Activated T-helper 2 cell treated with anti-CD3 and anti-CD28 coated beads, Interferon-gamma antibody, Interleukin-2, Interleukin-4, amounts not matched to agents 10 μg/mL and 5 μg/mL and 100 μg/mL, durations not matched to agents 14 hours and 24 hours and 36 hours (primary cell): ENCODE measurements at regions of chr3 and their contacts with region 1.

Region 1: GRCh38 chr3:151890721-151891141 is 17.3 kb downstream of the SUCNR1 start:
- DNase-seq: no peak
- H3K4me3 Mint-ChIP-seq: no peak overlapping the region
- H3K27ac Mint-ChIP-seq: peak overlapping the region; percentile 35
- H3K4me1 Mint-ChIP-seq: peaks cover 22% of the 10 kb centered on the region
- H3K27me3 Mint-ChIP-seq: no peaks in the 10 kb centered on the region

Region 2: DNA sequence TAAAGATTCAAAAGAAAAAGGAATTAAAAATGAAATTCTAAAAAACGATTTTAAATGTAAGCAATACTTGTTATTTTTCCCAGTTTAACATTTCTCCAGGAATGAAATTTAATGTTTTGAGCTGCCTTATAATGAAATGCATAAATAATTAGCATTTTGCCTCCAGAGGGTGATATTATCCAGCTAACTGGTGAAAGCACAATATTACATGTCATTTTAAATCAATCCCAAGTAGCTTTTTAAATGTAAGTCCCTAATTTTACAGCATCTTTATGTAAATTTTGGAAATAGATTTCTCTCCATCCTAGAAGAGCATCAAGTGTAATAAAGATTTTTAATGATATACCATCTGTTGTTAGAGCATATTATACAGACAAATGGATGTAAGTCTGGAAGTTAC is 805.1 kb after region 1 on chr3:
- intact Hi-C with region 1: loop called (anchors 10 kb)
- DNase-seq: no peak
- H3K4me3 Mint-ChIP-seq: no peak overlapping the region
- H3K27ac Mint-ChIP-seq: no peak overlapping the region
- H3K4me1 Mint-ChIP-seq: peaks cover 27% of the 10 kb centered on the region
- H3K27me3 Mint-ChIP-seq: peaks cover 3% of the 10 kb centered on the region